Aorta (tissue), 5 donors: ENCODE measurements at regions of chr3 and their contacts with region 1.

Region 1: DNA sequence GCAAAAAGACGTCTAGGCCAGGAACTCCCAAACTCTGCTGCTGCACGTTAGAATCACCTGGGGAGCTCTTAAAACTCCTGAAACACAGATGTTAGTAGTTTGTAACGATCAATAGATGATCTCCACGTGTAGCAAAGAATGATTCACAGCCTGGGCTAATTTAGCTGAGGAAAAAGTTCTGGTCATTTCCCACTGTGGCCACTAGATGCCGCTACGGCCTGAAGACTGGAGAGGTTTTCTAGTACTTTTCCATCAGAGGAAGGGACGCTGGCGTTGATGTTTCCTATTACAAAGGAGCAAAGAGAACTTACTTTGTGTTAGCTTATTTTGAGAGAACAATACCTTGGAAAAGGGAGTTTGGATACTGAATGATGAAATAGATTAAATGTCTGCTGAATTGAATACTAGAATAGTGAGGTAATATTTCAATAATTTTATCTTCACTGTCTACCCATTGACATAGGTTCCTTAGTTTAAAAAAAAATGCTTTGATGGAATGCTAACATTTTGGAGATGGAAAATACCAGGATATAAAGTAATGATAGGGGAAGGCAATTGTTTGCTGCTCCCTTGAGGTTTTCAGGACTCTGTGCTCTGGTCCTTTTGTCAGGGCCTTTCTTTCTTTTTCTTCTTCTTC is 159.1 kb downstream of the P3H2 start:
- DNase-seq: peak; percentile 81 to 89
- ATAC-seq: peak; percentile 90
- H3K4me3 ChIP-seq: no peak overlapping the region
- H3K27ac ChIP-seq: no peak overlapping the region
- H3K4me1 ChIP-seq: no peaks in the 10 kb centered on the region
- H3K27me3 ChIP-seq: no peaks in the 10 kb centered on the region

Region 2: GRCh38 chr3:189813647-189814240 is 147.9 kb before region 1 on chr3:
- intact Hi-C with region 1: no loop called
- DNase-seq: no peak
- ATAC-seq: no peak
- H3K4me3 ChIP-seq: no peak overlapping the region
- H3K27ac ChIP-seq: no peak overlapping the region
- H3K4me1 ChIP-seq: no peaks in the 10 kb centered on the region
- H3K27me3 ChIP-seq: no peaks in the 10 kb centered on the region

Region 3: DNA sequence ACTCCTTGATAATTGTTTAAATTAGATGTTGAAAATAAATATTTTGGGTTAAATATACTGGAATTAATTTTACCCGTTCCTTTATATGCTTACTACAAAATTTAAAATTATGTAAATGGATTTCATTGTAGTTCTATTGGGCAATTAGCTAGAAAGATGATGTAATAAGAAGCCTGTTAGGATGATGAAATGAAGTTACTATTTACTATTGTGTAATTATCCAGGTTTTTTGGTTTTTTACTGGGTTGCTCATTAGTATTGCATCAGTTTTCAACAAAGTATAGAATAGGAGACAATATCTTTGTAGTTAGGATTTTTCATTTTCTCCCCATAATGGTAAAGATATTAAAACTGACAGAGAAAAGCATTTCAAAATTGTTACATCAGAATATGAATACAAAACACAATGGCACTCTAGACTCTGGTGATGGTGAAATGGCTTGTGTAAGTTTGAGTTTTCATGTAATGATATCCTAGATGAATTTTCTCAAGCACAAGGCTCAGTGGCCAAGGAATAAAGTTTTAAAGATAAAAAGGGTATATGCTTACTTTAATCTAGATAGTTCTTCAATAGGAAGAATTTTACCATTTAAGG is 63.0 kb before region 1 on chr3:
- intact Hi-C with region 1: no loop called
- DNase-seq: no peak
- ATAC-seq: no peak
- H3K4me3 ChIP-seq: no peak overlapping the region
- H3K27ac ChIP-seq: no peak overlapping the region
- H3K4me1 ChIP-seq: no peaks in the 10 kb centered on the region
- H3K27me3 ChIP-seq: no peaks in the 10 kb centered on the region

Region 4: GRCh38 chr3:190205739-190206138 is 244.1 kb after region 1 on chr3:
- intact Hi-C with region 1: loop called (anchors 2 kb)
- DNase-seq: no peak
- ATAC-seq: no peak
- H3K4me3 ChIP-seq: no peak overlapping the region
- H3K27ac ChIP-seq: no peak overlapping the region
- H3K4me1 ChIP-seq: no peaks in the 10 kb centered on the region
- H3K27me3 ChIP-seq: no peaks in the 10 kb centered on the region

Region 5: GRCh38 chr3:190321789-190322603 is 360.4 kb after region 1 on chr3 and contains the start of gene CLDN1:
- intact Hi-C with region 1: loop called (anchors 5 kb)
- DNase-seq: peak; percentile 88 to 94
- ATAC-seq: peak; percentile 94
- H3K4me3 ChIP-seq: peak within 1 kb of the TSS in 1 of 2 donors; percentile 20
- H3K27ac ChIP-seq: no peak within 1 kb of the TSS
- H3K4me1 ChIP-seq: no peaks in the 10 kb centered on the region
- H3K27me3 ChIP-seq: no peaks in the 10 kb centered on the region
- total RNA-seq, gene CLDN1: 1.8 to 4.5 TPM

Region 6: GRCh38 chr3:190424478-190425439 is 463.1 kb after region 1 on chr3:
- intact Hi-C with region 1: loop called in 1 of 2 experiments (anchors 10 kb)
- DNase-seq: peak; percentile 59 to 77
- ATAC-seq: peak; percentile 84
- H3K4me3 ChIP-seq: no peak overlapping the region
- H3K27ac ChIP-seq: no peak overlapping the region
- H3K4me1 ChIP-seq: no peaks in the 10 kb centered on the region
- H3K27me3 ChIP-seq: no peaks in the 10 kb centered on the region